ENCODE measurements at regions of chr6 and their contacts with region 1.

Region 1: DNA sequence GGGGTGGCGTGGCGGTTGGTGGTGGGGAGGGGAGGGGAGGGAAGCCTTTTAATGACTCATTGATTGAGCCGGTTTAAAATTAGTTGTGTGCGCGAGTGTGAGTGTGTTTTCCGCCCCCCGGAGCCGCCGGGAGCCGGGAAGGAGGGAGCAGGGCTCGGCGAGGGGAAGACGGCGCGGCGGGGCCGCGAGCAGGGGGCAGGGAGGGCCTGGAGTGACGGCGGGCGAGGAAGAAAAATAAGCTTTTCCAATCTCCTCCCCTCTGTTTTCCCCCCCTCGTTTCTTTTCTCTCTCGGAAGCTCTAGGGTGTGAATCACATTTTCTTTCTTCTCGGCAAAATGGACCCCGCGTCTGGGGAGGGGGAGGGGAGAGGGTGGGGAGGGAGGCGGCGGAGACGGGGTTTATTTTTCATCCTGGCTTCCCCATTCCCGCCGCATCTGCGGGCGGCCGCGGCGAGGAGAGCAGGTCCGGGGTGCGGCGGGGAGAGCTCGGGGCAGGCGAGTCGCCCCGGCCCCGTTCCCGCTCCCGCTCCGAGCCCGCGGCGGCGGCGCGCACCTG is 847 bp downstream of the BICRAL start:
- DNase-seq: peak; percentile 89
- H3K4me3 ChIP-seq: peak overlapping the region; percentile 64 to 73
- H3K27ac ChIP-seq: peak overlapping the region; percentile 95
- H3K4me1 ChIP-seq: peaks cover 8 to 23% of the 10 kb centered on the region in 2 experiments
- H3K27me3 ChIP-seq: no peaks in the 10 kb centered on the region
- CTCF ChIP-seq: no peak
- EP300 ChIP-seq: peak in 1 of 2 experiments; percentile 64; a peak in 1 of 4 replicates
- RAD21 ChIP-seq: no peak

Region 2: GRCh38 chr6:42745707-42746462 is 36.8 kb before region 1 on chr6 and contains the start of gene TBCC:
- CTCF ChIA-PET with region 1: interaction called, 6 read pairs
- POLR2A ChIA-PET with region 1: interaction called, 59 read pairs
- DNase-seq: peak; percentile 97
- H3K4me3 ChIP-seq: peak within 1 kb of the TSS; percentile 75 to 82
- H3K27ac ChIP-seq: peak within 1 kb of the TSS; percentile 93 to 96
- H3K4me1 ChIP-seq: peaks cover 19 to 30% of the 10 kb centered on the region in 2 experiments; a peak in 3 of 4 replicates
- H3K27me3 ChIP-seq: no peaks in the 10 kb centered on the region
- CTCF ChIP-seq: no peak
- EP300 ChIP-seq: peak in 1 of 2 experiments; percentile 14; a peak in 2 of 4 replicates
- RAD21 ChIP-seq: no peak
- polyA plus RNA-seq, gene TBCC: 12.7 and 18.2 TPM in 2 replicates

Region 3: DNA sequence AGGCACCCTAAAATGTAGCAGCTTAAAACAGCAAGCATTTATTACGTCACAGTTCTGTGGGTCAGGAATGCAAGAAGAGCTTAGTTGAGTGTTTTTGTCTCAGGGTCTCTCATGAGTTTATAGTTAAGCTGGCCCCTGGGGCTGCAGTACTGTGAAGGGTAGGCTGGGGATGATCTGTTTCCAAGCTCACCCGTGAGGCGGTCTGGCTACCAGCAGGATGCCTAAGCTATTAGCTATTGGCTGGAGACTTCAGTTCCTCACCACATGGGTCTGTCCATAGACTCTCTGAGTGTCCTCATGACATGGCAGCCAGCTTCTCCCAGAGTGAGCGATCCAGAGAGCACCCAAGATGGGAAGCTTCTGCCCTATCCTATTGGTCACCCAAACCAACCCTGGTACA is 13.7 kb before region 1 on chr6:
- CTCF ChIA-PET with region 1: interaction called, 4 read pairs
- POLR2A ChIA-PET with region 1: interaction called, 15 read pairs
- DNase-seq: no peak
- H3K4me3 ChIP-seq: no peak overlapping the region
- H3K27ac ChIP-seq: no peak overlapping the region
- H3K4me1 ChIP-seq: 0 out of 4 replicates have a peak, but pooled peaks cover 0 to 10% of the 10 kb centered on the region in 2 experiments
- H3K27me3 ChIP-seq: no peaks in the 10 kb centered on the region
- CTCF ChIP-seq: no peak
- EP300 ChIP-seq: no peak
- RAD21 ChIP-seq: no peak

Measured in SK-N-SH (cell line).